Right ventricle myocardium inferior (tissue), 1 donor: ENCODE measurements at regions of chr2 and their contacts with region 1.

Region 1: GRCh38 chr2:73156539-73157124 is 43.9 kb upstream of the RAB11FIP5 start:
- DNase-seq: no peak
- ATAC-seq: peak; percentile 72

Region 2: GRCh38 chr2:73085691-73086360 is 70.8 kb before region 1 on chr2:
- intact Hi-C with region 1: loop called (anchors 1 kb)
- DNase-seq: peak; percentile 95
- ATAC-seq: peak; percentile 80